ENCODE measurements at regions of chr1 and their contacts with region 1.

Region 1: DNA sequence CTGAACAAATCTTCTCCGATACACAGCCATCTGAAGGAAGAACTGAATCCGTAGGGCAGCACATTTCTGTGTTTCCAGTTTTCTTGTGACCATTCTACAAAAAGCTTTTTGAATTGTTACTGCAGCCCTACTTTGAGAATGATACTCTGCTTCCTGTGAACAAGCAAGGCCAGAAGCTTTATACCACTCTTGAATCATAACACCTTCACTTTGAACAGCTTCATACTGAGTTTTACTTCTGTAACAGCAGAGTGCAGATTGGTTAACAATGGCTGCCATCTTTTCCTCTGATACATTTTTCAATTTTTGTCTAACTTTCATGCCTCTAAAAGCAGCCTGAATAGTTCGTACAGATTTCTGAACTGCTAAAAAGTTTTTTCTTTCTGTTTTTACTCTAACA is 33.6 kb upstream of the F13B start:
- DNase-seq: no peak
- H3K4me3 Mint-ChIP-seq: no peak overlapping the region
- H3K27ac Mint-ChIP-seq: no peak overlapping the region
- H3K4me1 Mint-ChIP-seq: peaks cover 33% of the 10 kb centered on the region
- H3K27me3 Mint-ChIP-seq: no peaks in the 10 kb centered on the region

Region 2: DNA sequence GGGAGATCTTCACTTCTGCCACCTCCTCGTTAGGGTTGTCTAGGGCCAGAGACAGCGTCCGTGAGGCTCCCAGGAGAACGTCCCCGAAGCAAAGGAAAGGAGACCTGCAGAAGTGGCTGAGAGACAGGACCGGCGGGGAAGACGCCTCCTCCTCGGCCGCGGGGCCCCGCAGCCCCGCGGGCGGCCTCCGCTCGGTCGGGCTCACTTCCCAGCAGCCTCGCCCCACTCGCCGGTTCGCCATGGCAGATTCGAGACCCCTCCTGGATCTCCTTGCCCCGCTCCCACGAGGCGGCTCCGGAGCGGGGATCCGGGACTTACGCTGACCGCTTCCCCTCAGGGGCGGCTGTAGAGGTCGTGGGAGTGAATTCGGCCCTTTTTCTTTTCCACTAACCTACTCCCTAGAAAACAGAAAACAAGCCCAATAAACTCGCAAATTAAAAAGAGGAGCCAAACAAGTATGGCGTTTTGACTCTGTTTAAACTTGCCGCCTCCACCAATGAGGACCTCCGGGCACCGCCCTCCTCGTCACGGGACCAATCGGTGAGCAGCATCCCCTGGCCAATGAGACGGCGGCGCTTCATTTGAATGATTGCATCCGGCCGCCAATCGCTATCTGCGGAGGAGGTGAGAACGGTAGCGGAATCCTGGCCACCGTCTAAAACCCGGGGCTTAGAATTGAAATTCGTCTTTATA is 45.7 kb after region 1 on chr1 and contains the start of gene ASPM:
- CTCF ChIA-PET with region 1: interaction called, 3 read pairs
- intact Hi-C with region 1: loop called (anchors 2 kb)
- DNase-seq: peak; percentile 98
- H3K4me3 Mint-ChIP-seq: peak within 1 kb of the TSS; percentile 85
- H3K27ac Mint-ChIP-seq: peak within 1 kb of the TSS; percentile 93
- H3K4me1 Mint-ChIP-seq: no peaks in the 10 kb centered on the region
- H3K27me3 Mint-ChIP-seq: peaks cover 19% of the 10 kb centered on the region
- total RNA-seq, gene ASPM: 26.4 to 27.6 TPM

Region 3: DNA sequence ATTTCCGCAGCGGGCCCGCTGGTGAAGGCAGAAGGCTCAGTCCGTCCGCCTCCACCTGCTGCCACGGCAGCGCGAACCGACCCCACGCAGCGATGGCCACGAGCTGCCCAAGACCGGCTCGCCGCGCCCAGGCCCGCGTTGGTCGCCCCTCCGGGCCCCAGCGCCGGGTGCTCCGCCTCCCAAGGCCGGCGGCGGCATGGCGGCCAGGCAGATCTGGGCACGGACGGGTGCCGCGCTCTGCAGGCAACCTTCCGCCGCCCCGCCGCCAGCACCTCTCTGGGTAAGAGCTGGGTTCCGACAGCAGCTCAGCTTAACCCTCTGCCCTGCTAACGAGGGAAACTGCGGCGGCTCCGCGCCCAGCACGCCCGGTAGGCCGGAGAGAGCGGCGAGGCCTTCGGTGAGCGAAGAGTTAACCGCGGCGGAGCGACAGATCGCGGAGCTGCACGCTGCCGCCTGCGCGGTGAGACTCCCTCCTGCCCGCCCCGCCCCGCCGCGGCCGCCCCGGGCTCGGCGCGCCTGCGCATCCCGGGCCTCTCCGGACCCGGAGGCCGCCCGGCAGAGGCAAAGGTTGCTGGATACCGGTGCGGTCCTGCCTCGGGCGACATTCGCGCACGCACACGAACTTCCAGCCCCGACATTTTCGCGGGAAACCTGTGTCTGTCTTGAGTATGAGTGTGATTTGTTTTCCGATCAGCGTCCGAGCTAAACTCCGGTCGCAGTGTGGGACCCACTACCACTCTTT is 801.9 kb after region 1 on chr1 and contains the start of gene C1orf53:
- CTCF ChIA-PET with region 1: no interaction called
- intact Hi-C with region 1: no loop called
- DNase-seq: peak; percentile 77
- H3K4me3 Mint-ChIP-seq: peak within 1 kb of the TSS; percentile 84
- H3K27ac Mint-ChIP-seq: peak within 1 kb of the TSS; percentile 55
- H3K4me1 Mint-ChIP-seq: peaks cover 10% of the 10 kb centered on the region
- H3K27me3 Mint-ChIP-seq: peaks cover 45% of the 10 kb centered on the region
- total RNA-seq, gene C1orf53: 0.52 TPM in 1 of 2 experiments, not detected in the other